Activated B cell treated with CpG ODN at 0.5 μM for 24 hours (primary cell): ENCODE measurements at regions of chr10 and their contacts with region 1.

Region 1: GRCh38 chr10:110803830-110804338 is 67.8 kb upstream of the PDCD4 start:
- DNase-seq: peak; percentile 29
- ATAC-seq: peak; percentile 70
- H3K4me3 Mint-ChIP-seq: no peak overlapping the region
- H3K27ac Mint-ChIP-seq: peak overlapping the region; percentile 54
- H3K4me1 Mint-ChIP-seq: peaks cover 26% of the 10 kb centered on the region
- H3K27me3 Mint-ChIP-seq: no peaks in the 10 kb centered on the region
- CTCF ChIP-seq: no peak

Region 2: DNA sequence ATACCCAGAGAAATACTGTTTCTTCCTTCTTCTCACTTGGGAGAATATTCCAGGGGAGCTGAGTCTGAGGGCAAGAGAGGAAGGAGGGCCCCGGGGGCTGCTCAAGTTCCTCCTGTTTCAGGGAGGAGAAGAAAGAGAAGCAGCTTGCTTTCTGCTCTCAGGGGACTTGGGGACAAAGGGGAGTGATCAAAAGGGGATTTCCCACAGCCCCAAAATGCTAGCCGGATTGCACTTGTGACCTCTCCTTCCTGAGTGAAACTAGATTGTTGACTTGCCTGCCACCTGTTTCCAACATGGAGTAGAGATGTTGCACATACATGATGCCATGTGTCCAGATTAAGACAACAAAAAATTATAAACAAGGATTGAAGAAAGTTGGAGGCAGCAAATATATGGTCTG is 39.1 kb after region 1 on chr10:
- CTCF ChIA-PET with region 1: interaction called, 15 read pairs
- POLR2A ChIA-PET with region 1: interaction called, 16 read pairs
- intact Hi-C with region 1: loop called (anchors 1 kb)
- DNase-seq: peak; percentile 37
- ATAC-seq: peak; percentile 69
- H3K4me3 Mint-ChIP-seq: peak overlapping the region; percentile 78
- H3K27ac Mint-ChIP-seq: peak overlapping the region; percentile 89
- H3K4me1 Mint-ChIP-seq: peaks cover 77% of the 10 kb centered on the region
- H3K27me3 Mint-ChIP-seq: no peaks in the 10 kb centered on the region
- CTCF ChIP-seq: no peak

Region 3: GRCh38 chr10:110871298-110872084 is 67.6 kb after region 1 on chr10 and contains the start of gene PDCD4:
- CTCF ChIA-PET with region 1: interaction called, 28 read pairs
- POLR2A ChIA-PET with region 1: interaction called, 22 read pairs
- intact Hi-C with region 1: loop called (anchors 1 kb)
- DNase-seq: peak; percentile 87
- ATAC-seq: peak; percentile 71
- H3K4me3 Mint-ChIP-seq: peak within 1 kb of the TSS; percentile 94
- H3K27ac Mint-ChIP-seq: peak within 1 kb of the TSS; percentile 97
- H3K4me1 Mint-ChIP-seq: peaks cover 76% of the 10 kb centered on the region
- H3K27me3 Mint-ChIP-seq: no peaks in the 10 kb centered on the region
- CTCF ChIP-seq: no peak
- total RNA-seq, gene PDCD4: 143 and 145 TPM in 2 replicates

Region 4: DNA sequence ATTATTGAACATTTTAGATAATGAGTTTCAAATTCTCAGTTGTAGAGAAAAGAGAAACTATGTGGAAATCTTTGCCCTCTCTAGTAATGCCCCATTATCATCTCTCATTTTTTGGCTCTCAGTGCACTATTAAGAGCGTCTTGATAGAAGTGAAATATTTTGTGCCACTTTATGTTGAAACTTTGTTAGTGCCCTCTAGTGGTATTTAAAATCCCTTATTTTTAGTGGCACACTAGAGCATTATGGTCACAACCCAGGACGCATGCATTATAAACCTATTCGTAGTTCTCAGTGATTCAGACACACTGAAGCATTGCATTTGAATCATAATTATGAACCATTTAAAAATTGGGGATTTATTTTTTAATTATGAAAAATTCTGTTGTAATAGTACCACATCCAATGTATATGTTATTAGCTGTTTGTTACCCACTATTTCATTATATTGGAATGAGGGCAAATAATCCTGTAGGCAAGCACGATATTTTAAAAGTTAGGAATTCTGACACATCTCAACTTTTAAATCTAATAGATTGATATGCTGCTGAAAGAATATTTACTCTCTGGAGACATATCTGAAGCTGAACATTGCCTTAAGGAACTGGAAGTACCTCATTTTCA is 89.8 kb after region 1 on chr10:
- CTCF ChIA-PET with region 1: interaction called, 131 read pairs
- POLR2A ChIA-PET with region 1: interaction called, 3 read pairs
- intact Hi-C with region 1: loop called (anchors 1 kb)
- DNase-seq: no peak
- ATAC-seq: peak; percentile 93
- H3K4me3 Mint-ChIP-seq: no peak overlapping the region
- H3K27ac Mint-ChIP-seq: no peak overlapping the region
- H3K4me1 Mint-ChIP-seq: peaks cover 22% of the 10 kb centered on the region
- H3K27me3 Mint-ChIP-seq: no peaks in the 10 kb centered on the region
- CTCF ChIP-seq: no peak

Region 5: DNA sequence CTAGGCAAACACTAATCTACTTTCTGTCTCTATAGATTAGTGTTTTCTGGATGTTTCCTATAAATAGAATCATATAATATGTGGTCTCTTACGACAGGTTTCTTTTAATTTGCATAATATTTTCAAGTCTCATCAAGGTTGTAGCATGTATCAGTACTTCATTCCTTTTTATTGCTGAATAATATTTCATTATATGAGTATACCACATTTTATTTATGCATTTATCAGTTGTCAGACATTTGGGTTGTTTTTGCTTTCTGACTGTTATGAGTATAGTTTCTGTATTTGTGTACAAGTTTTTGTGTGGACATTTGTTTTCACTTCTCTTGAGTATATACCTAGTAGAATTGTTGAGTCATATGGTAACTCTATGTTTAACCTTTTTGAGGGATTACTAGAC is 163.8 kb after region 1 on chr10:
- CTCF ChIA-PET with region 1: no interaction called
- POLR2A ChIA-PET with region 1: no interaction called
- intact Hi-C with region 1: no loop called
- DNase-seq: no peak
- ATAC-seq: no peak
- H3K4me3 Mint-ChIP-seq: no peak overlapping the region
- H3K27ac Mint-ChIP-seq: no peak overlapping the region
- H3K4me1 Mint-ChIP-seq: peaks cover 66% of the 10 kb centered on the region
- H3K27me3 Mint-ChIP-seq: no peaks in the 10 kb centered on the region
- CTCF ChIP-seq: no peak

Region 6: GRCh38 chr10:112140110-112140970 is 1336.5 kb after region 1 on chr10:
- CTCF ChIA-PET with region 1: no interaction called
- POLR2A ChIA-PET with region 1: no interaction called
- intact Hi-C with region 1: no loop called
- DNase-seq: peak; percentile 53
- ATAC-seq: peak; percentile 99
- H3K4me3 Mint-ChIP-seq: no peak overlapping the region
- H3K27ac Mint-ChIP-seq: no peak overlapping the region
- H3K4me1 Mint-ChIP-seq: peaks cover 3% of the 10 kb centered on the region
- H3K27me3 Mint-ChIP-seq: no peaks in the 10 kb centered on the region
- CTCF ChIP-seq: peak; percentile 61